ENCODE measurements at regions of chr1 and their contacts with region 1.

Region 1: DNA sequence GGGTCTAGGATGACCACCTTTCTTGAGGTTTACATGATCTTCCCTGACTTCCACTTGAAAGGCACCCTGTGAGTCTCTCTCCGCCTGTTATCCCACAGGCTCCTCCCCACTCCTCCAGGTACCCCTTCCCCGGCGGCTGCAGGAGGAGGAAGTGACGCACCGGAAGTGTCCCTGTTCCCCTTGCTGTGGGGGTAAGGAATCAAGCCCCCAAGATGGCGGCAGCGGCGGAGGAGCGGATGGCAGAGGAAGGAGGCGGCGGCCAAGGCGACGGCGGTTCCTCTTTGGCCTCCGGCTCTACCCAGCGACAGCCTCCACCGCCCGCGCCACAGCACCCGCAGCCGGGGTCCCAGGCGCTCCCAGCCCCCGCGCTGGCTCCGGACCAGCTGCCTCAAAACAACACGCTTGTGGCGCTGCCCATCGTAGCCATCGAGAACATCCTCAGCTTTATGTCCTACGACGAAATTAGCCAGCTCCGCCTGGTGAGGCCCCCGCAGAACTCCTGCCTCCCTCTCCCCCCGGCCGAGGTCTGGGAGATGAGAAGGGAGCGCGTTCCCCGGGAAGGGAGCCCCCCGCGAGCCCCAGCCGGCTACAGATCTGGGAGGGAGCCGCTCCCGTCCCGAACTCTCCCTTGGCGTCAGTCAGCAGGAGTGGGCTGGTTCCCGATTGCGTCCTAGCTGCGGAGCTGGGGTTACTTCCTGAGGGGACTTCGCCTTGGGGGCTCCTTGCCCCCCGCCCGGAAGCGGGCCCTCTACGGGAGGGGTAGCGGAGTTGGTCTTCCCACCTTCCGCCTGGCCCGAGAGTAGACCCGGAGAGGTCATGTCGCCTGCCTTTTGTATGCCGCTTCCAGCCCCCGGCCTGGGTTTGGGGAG is at the start of gene FBXO28:
- DNase-seq: peak in 1 of 2 donors; percentile 94
- H3K4me3 ChIP-seq: peak within 1 kb of the TSS; percentile 65 to 94
- H3K27ac ChIP-seq: peak within 1 kb of the TSS; percentile 86
- H3K4me1 ChIP-seq: peaks cover 28% of the 10 kb centered on the region
- H3K27me3 ChIP-seq: no peaks in the 10 kb centered on the region
- CTCF ChIP-seq: peak in 1 of 3 experiments; percentile 8
- POLR2A ChIP-seq: peak in 1 of 2 donors; percentile 89
- total RNA-seq, gene FBXO28: 20.1 TPM

Region 2: DNA sequence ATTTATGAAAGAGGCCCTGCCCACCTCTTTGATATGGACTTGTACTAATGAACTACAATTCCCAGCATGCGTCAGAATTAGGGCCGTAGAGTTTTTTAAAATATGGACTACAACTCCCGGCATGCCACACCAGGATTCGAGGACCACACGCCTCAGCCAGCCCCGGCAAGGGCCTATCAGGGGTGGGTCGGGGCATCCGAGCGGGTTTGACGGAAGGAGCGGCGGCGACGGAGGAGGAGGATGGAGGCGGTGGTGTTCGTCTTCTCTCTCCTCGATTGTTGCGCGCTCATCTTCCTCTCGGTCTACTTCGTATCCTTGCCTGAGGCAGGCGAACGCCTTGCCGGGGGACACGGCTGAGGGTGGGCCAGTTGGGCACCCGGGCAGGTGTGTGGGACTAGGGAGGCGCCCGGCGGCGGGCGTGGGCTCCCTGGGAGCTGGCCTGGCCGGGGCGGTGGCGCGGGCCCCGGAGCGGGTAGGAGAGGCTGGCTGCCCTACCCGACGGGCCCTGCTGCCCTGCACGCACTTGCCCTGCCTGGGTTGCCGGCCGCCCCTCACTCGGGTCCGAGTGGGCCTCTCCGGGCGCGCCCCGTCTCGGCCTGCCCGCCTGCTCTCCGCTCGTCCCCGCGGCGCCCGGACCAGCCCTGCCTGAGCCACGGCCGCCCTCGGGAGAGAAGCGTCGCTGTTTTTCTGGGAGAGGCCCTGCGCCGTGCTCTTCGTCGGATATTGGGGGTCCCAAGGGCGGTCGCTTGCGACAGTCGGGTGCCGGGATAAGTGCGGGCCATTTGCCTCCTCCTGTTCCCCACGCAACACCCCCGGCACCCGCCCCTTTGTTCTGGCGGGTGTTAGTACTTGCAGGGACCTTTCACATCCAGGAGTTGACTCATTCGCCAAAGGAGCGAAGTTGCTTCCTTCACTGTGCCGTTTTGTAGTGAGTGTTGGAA is 242.8 kb after region 1 on chr1 and contains the start of gene CNIH4:
- intact Hi-C with region 1: loop called (anchors 10 kb)
- DNase-seq: peak in 1 of 2 donors; percentile 94
- H3K4me3 ChIP-seq: peak within 1 kb of the TSS; percentile 69 to 98
- H3K27ac ChIP-seq: peak within 1 kb of the TSS; percentile 89
- H3K4me1 ChIP-seq: peaks cover 26% of the 10 kb centered on the region
- H3K27me3 ChIP-seq: no peaks in the 10 kb centered on the region
- CTCF ChIP-seq: no peak
- POLR2A ChIP-seq: peak in 1 of 2 donors; percentile 92
- total RNA-seq, gene CNIH4: 36.1 TPM

Region 3: DNA sequence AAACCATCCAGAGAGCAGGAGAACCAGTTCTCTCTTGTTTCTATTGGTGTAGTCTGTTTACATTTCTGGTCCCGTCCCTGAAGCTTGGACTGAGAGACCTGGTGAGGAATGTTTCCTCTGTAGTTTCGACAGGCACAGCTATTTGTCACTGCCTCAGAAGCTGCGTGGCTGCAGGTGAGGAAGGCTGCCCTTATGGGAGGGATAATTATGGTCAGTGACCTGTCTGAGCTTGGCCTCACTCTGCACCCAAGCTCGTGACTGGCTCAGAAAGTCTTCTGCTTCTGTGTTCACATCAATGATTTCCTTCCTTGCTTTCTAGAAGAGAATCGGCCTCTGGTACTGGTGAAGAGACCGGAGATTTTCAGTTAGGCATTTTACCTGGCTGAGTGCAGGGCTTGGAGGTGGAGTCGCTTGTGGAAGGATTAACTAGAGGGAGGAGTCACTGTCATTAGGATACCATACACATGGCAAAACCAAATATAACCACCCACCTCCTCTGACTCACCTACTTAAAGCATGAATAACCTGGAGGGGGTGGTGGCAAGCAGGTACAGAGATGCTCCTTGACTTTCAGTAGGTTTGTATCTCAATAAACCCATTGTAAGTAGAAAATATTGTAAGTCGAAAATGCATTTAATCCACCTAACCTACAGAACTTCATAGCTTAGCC is 340.4 kb after region 1 on chr1:
- intact Hi-C with region 1: loop called (anchors 5 kb)
- DNase-seq: no peak
- H3K4me3 ChIP-seq: no peak overlapping the region
- H3K27ac ChIP-seq: peak overlapping the region; percentile 21
- H3K4me1 ChIP-seq: peaks cover 25% of the 10 kb centered on the region
- H3K27me3 ChIP-seq: no peaks in the 10 kb centered on the region
- CTCF ChIP-seq: no peak
- POLR2A ChIP-seq: no peak

Region 4: DNA sequence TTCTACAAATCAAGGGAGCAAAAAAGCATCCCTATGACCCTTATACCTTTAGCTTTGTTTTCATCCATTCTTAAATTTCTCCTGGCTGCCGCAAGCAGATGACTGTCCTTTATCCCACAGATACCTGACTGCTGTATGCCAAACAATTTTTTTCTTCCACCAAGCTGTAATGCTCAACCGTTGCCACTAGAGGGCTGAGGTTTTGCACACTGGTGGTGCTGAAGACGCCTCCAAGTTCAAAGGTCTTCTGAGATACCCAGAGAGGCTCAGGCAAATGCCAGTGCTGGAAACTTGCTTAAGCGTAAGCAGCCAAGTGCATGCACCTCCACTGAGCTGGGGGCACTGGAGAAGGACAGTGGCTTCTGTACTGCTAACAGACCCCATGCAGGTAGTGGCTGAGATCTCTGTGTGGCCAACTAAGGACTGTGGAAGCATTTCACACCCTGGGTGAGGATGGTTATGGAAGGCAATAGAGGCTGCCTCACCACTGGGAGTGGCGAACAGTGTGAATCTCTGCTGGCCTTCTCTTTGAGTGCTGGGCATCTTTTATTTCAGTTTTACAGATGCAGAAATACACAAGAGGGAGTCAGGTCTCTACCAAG is 530.5 kb after region 1 on chr1:
- intact Hi-C with region 1: no loop called
- DNase-seq: no peak
- H3K4me3 ChIP-seq: no peak overlapping the region
- H3K27ac ChIP-seq: no peak overlapping the region
- H3K4me1 ChIP-seq: no peaks in the 10 kb centered on the region
- H3K27me3 ChIP-seq: no peaks in the 10 kb centered on the region
- CTCF ChIP-seq: peak; percentile 59 to 76 (median 69)
- POLR2A ChIP-seq: no peak